ENCODE measurements at regions of chr14 and their contacts with region 1.

Region 1: DNA sequence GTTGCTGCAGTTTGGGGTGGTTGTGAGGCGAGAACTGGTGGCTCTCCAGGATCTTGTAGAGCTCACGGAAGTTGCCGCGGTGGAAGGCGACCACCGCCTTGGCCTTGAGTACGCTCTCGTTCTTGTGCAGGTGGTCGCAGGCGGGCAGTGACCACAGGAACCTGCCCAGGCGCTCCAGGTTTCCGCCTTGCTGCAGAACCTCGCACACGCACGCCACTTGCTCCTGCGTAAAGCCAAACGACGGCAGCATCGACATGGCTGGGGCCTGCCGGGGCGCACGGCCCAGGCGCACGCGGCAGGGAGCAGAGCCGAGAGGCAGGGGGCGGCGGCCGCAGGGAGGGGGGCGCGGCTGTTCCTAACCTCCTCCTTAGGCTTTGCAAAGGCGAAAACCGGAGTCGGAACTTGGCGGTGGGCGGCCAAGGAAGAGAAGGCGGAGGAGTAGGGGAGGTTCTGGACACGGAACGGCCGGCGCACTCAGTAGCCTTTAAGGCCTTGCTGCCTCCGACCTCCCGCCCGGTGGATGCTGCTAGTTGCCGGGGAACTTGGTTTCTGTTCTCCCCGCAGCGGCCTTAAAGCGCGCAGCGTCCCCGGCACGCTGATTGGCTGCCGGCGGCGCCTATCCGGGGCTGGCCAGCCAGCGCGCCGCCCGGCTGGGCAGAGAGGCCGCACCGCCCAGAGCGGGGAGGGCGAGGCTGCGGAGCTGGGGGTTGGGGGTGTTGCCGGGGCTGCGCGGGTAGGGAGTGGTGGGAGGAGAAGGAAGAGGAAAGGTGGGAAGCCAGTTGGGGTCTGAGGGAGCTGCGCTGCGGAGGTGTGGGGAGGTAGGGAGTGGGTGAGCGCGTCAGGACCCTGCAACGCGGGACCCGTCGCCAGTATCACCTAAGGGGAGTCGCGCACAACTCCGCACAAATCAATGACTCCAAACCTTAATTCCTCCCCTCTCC is at the start of gene SIX1:
- DNase-seq: peak; percentile 86 to 92
- ATAC-seq: peak; percentile 78 to 90 (median 84)
- H3K4me3 ChIP-seq: peak within 1 kb of the TSS; percentile 91
- H3K27ac ChIP-seq: peak within 1 kb of the TSS; percentile 93
- H3K4me1 ChIP-seq: peaks cover 13% of the 10 kb centered on the region
- H3K27me3 ChIP-seq: no peaks in the 10 kb centered on the region
- CTCF ChIP-seq: no peak
- total RNA-seq, gene SIX1: 38.5 to 58.0 (median 43.4) TPM

Region 2: GRCh38 chr14:60724137-60724619 is 75.0 kb after region 1 on chr14 and contains the start of gene SIX4:
- intact Hi-C with region 1: loop called in 1 of 2 experiments (anchors 2 kb)
- DNase-seq: peak; percentile 80 to 90
- ATAC-seq: peak; percentile 78 to 86 (median 82)
- H3K4me3 ChIP-seq: peak within 1 kb of the TSS; percentile 96
- H3K27ac ChIP-seq: peak within 1 kb of the TSS; percentile 97
- H3K4me1 ChIP-seq: peaks cover 16% of the 10 kb centered on the region
- H3K27me3 ChIP-seq: peaks cover 0 to 2% (median 0%) of the 10 kb centered on the region in 3 donors
- CTCF ChIP-seq: no peak
- total RNA-seq, gene SIX4: 24.8 to 44.8 (median 33.2) TPM

Region 3: GRCh38 chr14:60862286-60862685 is 213.1 kb after region 1 on chr14:
- intact Hi-C with region 1: loop called (anchors 5 kb)
- DNase-seq: no peak
- ATAC-seq: peak; percentile 88 to 94 (median 90)
- H3K4me3 ChIP-seq: peak overlapping the region; percentile 20
- H3K27ac ChIP-seq: peak overlapping the region; percentile 74
- H3K4me1 ChIP-seq: peaks cover 56% of the 10 kb centered on the region
- H3K27me3 ChIP-seq: no peaks in the 10 kb centered on the region
- CTCF ChIP-seq: no peak

Region 4: GRCh38 chr14:61125867-61126572 is 476.8 kb after region 1 on chr14:
- intact Hi-C with region 1: loop called (anchors 5 to 10 kb)
- DNase-seq: peak; percentile 75 to 89
- ATAC-seq: peak; percentile 71 to 77 (median 74)
- H3K4me3 ChIP-seq: peak overlapping the region; percentile 37
- H3K27ac ChIP-seq: peak overlapping the region; percentile 97
- H3K4me1 ChIP-seq: peaks cover 57% of the 10 kb centered on the region
- H3K27me3 ChIP-seq: no peaks in the 10 kb centered on the region
- CTCF ChIP-seq: no peak

Region 5: DNA sequence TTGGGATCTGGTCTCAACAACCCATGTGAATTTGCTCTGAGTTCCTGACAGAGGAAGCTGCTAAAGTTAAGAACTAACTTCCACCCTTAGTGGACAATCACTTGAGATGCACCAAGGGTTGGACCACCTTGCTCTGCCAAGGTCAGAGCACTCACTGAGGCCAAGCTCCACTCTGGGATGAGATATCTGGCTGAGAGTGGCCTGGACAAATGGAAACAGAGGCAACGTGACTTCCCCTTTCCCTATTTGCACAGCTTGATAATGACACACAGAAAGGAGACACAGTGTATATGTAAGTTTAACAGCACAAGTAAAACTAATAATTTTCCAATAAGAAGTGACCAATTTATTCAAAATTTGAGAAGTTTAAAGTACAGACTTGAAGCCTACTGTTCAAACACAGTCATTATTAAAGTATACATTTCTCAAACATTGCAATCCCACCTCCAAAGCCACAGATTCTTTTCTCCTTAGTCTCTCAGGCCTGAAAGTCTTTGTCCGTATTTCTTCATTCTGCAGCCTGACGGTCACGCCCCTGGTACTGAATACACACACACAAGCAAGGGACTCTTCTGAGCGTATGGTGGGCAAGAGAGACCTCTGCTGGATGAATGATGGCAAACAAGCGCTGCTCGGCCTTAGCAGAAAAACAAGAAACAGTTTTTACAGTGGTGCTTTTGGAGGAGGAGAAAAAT is 603.3 kb after region 1 on chr14:
- intact Hi-C with region 1: loop called in 1 of 2 experiments (anchors 5 kb)
- DNase-seq: peak; percentile 68 to 79
- ATAC-seq: peak; percentile 89 to 94 (median 92)
- H3K4me3 ChIP-seq: peak overlapping the region; percentile 19
- H3K27ac ChIP-seq: peak overlapping the region; percentile 72
- H3K4me1 ChIP-seq: peaks cover 41% of the 10 kb centered on the region
- H3K27me3 ChIP-seq: no peaks in the 10 kb centered on the region
- CTCF ChIP-seq: peak; percentile 88